T-cell (primary cell): ENCODE measurements at regions of chr3 and their contacts with region 1.

Region 1: GRCh38 chr3:128969993-128970739 is 23.7 kb downstream of the CFAP92 start:
- DNase-seq: peak; percentile 21 to 82 (median 57)
- ATAC-seq: peak; percentile 62 to 69 (median 63)
- H3K4me3 ChIP-seq: no peak overlapping the region
- H3K4me3 Mint-ChIP-seq: no peak overlapping the region
- H3K27ac ChIP-seq: no peak overlapping the region
- H3K27ac Mint-ChIP-seq: no peak overlapping the region
- H3K4me1 ChIP-seq: no peaks in the 10 kb centered on the region
- H3K4me1 Mint-ChIP-seq: peaks cover 3 to 9% (median 7%) of the 10 kb centered on the region in 3 donors
- H3K27me3 ChIP-seq: peaks cover 0 to 9% of the 10 kb centered on the region in 2 experiments
- H3K27me3 Mint-ChIP-seq: no peaks in the 10 kb centered on the region

Region 2: DNA sequence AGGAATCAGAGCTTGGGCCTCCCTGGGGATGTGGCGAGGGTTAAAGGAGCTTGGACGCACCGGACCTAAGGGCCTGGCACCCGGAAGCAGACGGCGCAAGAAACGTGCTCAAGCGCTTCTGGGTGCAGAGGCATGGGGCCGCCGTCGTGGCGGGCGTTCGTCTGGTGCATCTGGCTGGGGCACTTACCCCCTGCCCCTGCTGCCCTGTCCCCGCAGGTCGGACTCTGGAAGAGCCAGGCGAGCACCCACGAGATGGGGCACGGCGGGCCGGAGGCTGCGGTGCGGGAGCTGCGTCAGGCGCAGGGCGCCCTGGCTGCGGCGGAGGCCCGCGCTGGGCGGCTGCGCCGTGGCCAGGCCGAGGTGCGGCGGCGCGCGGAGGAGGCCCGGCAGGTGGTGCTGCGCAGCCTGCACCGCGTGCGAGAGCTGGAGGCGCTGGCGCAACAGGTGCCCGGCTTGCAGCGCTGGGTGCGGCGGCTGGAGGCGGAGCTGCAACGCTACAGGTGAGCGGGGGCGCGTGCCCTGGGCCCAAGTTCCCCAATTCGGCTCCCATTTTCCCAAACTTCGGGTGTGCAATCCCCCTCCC is 33.5 kb after region 1 on chr3:
- CTCF ChIA-PET with region 1: interaction called, 6 to 15 read pairs
- POLR2A ChIA-PET with region 1: interaction called in 1 of 2 experiments, 6 read pairs
- DNase-seq: peak in 34 of 35 experiments; percentile 21 to 81 (median 48)
- ATAC-seq: peak; percentile 85 to 90 (median 90)
- H3K4me3 ChIP-seq: peak overlapping the region in 1 of 2 donors; percentile 15
- H3K4me3 Mint-ChIP-seq: peak overlapping the region; percentile 40 to 82 (median 62)
- H3K27ac ChIP-seq: no peak overlapping the region
- H3K27ac Mint-ChIP-seq: no peak overlapping the region
- H3K4me1 ChIP-seq: peaks cover 19 to 50% of the 10 kb centered on the region in 2 experiments
- H3K4me1 Mint-ChIP-seq: peaks cover 47 to 52% (median 48%) of the 10 kb centered on the region in 3 donors
- H3K27me3 ChIP-seq: peaks cover 0 to 45% of the 10 kb centered on the region in 2 experiments
- H3K27me3 Mint-ChIP-seq: peaks cover 14 to 33% of the 10 kb centered on the region in 2 donors

Region 3: GRCh38 chr3:129052675-129053074 is 82.5 kb after region 1 on chr3:
- CTCF ChIA-PET with region 1: interaction called, 6 to 13 read pairs
- POLR2A ChIA-PET with region 1: no interaction called
- DNase-seq: no peak
- ATAC-seq: no peak
- H3K4me3 ChIP-seq: no peak overlapping the region
- H3K4me3 Mint-ChIP-seq: peak overlapping the region in 1 of 3 donors; percentile 47
- H3K27ac ChIP-seq: no peak overlapping the region
- H3K27ac Mint-ChIP-seq: no peak overlapping the region
- H3K4me1 ChIP-seq: peaks cover 0 to 5% of the 10 kb centered on the region in 2 experiments
- H3K4me1 Mint-ChIP-seq: peaks cover 5 to 12% (median 11%) of the 10 kb centered on the region in 3 donors
- H3K27me3 ChIP-seq: peaks cover 0 to 3% of the 10 kb centered on the region in 2 experiments
- H3K27me3 Mint-ChIP-seq: no peaks in the 10 kb centered on the region

Region 4: DNA sequence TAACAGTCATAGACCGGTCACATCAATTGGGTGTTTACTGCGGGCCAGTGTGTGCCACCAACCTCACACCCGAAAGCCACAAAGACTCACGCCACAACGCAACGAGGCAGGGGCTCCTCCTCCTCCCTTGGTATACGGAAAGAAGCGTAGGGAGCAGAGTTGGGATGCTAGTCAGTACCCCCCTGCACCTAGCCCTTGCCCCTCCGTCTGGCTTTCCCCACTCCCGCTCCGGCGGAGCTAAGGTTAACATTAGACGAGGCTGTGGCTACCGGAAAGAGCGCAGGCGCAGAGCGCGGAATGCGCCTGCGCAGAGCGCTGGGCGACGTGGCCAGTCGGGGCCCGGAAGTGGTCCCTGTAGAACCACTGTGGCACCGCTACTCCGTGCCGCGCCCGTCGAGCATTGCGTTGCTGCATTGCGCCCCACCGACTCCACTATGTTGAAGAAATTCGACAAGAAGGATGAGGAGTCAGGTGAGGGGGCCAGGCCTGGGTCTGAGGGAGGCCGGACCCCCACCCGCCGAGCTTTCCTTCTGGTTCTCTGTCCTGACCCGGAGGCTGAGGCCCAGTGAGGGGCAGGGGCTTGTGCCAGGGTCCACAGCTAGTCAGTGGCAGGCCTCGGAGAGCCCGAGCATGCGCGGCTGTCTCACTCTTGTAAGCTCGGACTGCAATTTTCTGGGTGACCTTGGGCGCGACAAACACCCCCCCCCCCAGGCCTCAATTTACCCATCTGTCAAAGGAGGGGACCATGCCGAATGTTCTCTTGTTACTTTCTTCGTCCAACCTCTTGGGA is 279.3 kb after region 1 on chr3 and contains the start of gene COPG1:
- CTCF ChIA-PET with region 1: interaction called, 59 to 75 read pairs
- POLR2A ChIA-PET with region 1: no interaction called
- DNase-seq: peak; percentile 71 to 93 (median 82)
- ATAC-seq: peak; percentile 86 to 91 (median 90)
- H3K4me3 ChIP-seq: peak within 1 kb of the TSS; percentile 65 to 94
- H3K4me3 Mint-ChIP-seq: peak within 1 kb of the TSS; percentile 89 to 93 (median 92)
- H3K27ac ChIP-seq: peak within 1 kb of the TSS; percentile 50
- H3K27ac Mint-ChIP-seq: peak within 1 kb of the TSS; percentile 92 to 95
- H3K4me1 ChIP-seq: peaks cover 9 to 41% of the 10 kb centered on the region in 2 experiments
- H3K4me1 Mint-ChIP-seq: peaks cover 49 to 57% (median 50%) of the 10 kb centered on the region in 3 donors
- H3K27me3 ChIP-seq: no peaks in the 10 kb centered on the region
- H3K27me3 Mint-ChIP-seq: no peaks in the 10 kb centered on the region
- total RNA-seq, gene COPG1: 96.0 to 139 (median 116) TPM